Caco-2 (cell line): ENCODE measurements at regions of chr7 and their contacts with region 1.

Region 1: DNA sequence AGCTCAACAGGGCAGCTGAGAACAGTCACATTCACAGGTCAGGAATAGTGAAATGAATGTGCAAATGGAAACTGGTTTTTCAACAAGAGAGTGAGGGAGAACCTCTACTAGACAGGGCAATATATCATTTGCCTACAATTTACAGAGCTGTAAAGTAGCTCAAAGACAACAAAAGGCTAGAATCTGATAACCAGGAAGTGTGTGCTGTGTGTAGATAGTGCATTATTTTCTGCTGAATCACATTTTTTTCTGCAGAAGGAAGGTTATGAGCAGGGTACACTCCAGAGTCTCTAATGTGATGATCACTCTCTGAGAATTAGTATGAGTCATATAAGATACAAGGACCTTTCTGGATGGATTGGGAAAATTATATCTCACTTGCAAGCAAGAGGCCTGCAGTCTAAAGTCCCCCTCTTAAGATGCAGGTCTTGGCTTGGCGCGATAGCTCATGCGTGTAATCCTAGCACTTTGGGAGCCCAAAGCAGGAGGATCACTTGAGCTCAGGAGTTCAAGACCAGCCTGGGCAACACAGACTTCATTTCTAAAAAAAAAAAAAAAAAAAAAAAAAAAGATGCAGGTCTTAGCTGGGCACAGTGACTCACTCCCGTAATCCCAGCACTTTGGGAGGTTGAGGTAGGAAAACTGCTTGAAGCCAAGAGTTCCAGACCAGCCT is 59.9 kb upstream of the COBL start:
- DNase-seq: peak; percentile 74 to 79
- H3K4me3 ChIP-seq: no peak overlapping the region
- H3K4me3 Mint-ChIP-seq: peak overlapping the region; percentile 22
- H3K27ac Mint-ChIP-seq: peak overlapping the region; percentile 66
- H3K4me1 ChIP-seq: peaks cover 18% of the 10 kb centered on the region
- H3K4me1 Mint-ChIP-seq: peaks cover 9% of the 10 kb centered on the region
- H3K27me3 ChIP-seq: no peaks in the 10 kb centered on the region
- H3K27me3 Mint-ChIP-seq: no peaks in the 10 kb centered on the region
- CTCF ChIP-seq: no peak

Region 2: DNA sequence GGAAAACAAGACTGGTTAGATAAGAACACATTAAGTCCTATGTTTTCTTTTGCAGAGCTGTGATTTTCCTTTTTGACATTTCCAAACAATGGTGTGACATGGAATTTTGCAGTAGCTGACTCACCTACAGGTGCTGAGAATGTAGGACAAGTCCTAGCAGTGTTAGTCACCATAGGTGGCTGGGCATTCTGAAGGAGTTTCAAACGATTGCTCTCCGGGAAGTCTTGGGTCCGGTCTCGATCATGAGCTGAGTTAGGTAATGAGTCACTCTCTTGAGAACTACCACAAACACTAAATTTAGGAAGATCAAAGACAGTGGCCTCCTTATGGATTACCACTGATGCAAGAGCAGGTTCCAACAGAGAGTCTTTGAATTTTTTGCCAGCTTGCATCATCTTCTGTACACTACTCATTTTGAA is 930.0 kb before region 1 on chr7:
- CTCF ChIA-PET with region 1: no interaction called
- POLR2A ChIA-PET with region 1: interaction called, 3 read pairs
- intact Hi-C with region 1: loop called (anchors 1 kb)
- DNase-seq: peak; percentile 81 to 86
- H3K4me3 ChIP-seq: no peak overlapping the region
- H3K4me3 Mint-ChIP-seq: peak overlapping the region; percentile 32
- H3K27ac Mint-ChIP-seq: peak overlapping the region; percentile 68
- H3K4me1 ChIP-seq: peaks cover 27% of the 10 kb centered on the region
- H3K4me1 Mint-ChIP-seq: peaks cover 21% of the 10 kb centered on the region
- H3K27me3 ChIP-seq: no peaks in the 10 kb centered on the region
- H3K27me3 Mint-ChIP-seq: no peaks in the 10 kb centered on the region
- CTCF ChIP-seq: no peak

Region 3: GRCh38 chr7:51045319-51046102 is 331.0 kb before region 1 on chr7:
- CTCF ChIA-PET with region 1: no interaction called
- POLR2A ChIA-PET with region 1: no interaction called
- intact Hi-C with region 1: loop called (anchors 1 kb)
- DNase-seq: peak; percentile 78 to 89
- H3K4me3 ChIP-seq: no peak overlapping the region
- H3K4me3 Mint-ChIP-seq: peak overlapping the region; percentile 65
- H3K27ac Mint-ChIP-seq: peak overlapping the region; percentile 97
- H3K4me1 ChIP-seq: peaks cover 32% of the 10 kb centered on the region
- H3K4me1 Mint-ChIP-seq: peaks cover 27% of the 10 kb centered on the region
- H3K27me3 ChIP-seq: no peaks in the 10 kb centered on the region
- H3K27me3 Mint-ChIP-seq: no peaks in the 10 kb centered on the region
- CTCF ChIP-seq: no peak

Region 4: DNA sequence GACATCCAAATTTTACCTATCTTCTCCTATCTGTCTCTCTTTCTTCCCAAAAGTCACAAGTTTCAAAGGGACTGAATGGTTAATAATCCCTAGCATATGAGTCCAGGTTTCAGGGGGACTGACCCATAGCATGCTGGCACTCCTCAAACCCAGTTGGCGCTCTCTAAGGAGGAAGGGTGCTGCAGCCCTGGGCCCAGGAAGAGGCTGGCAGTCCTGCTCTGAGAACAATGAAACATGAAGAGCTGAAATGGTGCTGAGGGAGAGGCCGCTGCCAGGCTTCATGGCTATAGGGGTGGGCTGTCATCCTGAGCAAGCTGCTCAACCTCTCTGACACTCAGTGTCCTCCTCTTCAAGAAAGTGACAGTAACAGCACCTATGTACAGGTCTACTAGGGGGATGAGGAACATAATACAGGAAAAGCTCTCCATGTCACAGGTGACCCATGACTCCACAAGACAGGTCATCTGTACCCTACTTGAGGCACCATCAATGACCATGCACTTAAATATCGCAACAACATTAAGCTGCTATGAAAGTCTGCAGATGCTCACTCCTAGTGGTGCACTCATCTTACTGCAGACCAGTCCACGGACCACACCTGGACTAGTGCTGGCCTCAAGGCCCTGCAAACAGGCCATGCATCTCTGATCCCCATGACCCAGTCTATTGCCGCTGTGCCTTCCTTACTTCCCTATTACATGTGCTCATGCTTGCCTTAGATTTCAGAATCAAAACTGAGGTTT is 77.0 kb before region 1 on chr7:
- CTCF ChIA-PET with region 1: no interaction called
- POLR2A ChIA-PET with region 1: no interaction called
- intact Hi-C with region 1: no loop called
- DNase-seq: no peak
- H3K4me3 ChIP-seq: no peak overlapping the region
- H3K4me3 Mint-ChIP-seq: no peak overlapping the region
- H3K27ac Mint-ChIP-seq: no peak overlapping the region
- H3K4me1 ChIP-seq: peaks cover 20% of the 10 kb centered on the region
- H3K4me1 Mint-ChIP-seq: peaks cover 13% of the 10 kb centered on the region
- H3K27me3 ChIP-seq: no peaks in the 10 kb centered on the region
- H3K27me3 Mint-ChIP-seq: no peaks in the 10 kb centered on the region
- CTCF ChIP-seq: peak in 1 of 2 experiments; percentile 21

Region 5: DNA sequence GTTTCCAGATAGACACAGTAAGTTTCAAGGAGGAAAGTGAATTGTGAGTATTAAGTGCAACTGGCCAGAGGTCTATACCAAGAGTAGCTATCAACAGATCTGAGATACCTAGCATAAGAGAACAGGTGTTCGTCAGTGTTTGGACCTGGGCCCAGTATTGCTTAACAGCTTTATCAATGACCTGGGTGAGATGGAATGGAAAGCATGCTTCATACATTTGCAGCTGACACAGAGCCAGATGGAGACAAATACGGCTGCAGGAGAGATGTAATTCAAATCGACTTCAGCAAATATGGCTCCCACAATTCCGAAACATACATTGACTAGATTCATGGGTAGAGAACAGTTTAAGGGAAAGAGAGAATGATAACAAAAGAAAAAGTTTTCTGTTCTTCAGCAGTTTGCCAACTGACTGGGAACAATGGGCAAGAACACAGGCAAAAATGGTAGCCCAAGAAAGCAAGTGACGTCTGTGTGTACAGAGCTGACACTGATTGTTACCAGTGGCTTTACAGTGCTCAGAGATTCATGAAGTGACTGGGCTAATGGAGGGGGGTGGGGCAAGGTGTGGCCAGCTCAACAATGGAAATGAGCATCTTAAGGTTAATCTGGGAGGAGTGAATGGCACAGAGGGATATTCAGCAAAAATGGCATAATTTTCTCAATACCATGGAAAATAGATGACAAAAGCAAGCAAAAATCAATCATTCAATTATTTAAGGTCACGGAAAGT is 32.0 kb before region 1 on chr7:
- CTCF ChIA-PET with region 1: interaction called, 8 read pairs
- POLR2A ChIA-PET with region 1: interaction called, 4 read pairs
- intact Hi-C with region 1: loop called (anchors 1 kb)
- DNase-seq: peak; percentile 67 to 73
- H3K4me3 ChIP-seq: no peak overlapping the region
- H3K4me3 Mint-ChIP-seq: peak overlapping the region; percentile 51
- H3K27ac Mint-ChIP-seq: peak overlapping the region; percentile 76
- H3K4me1 ChIP-seq: peaks cover 60% of the 10 kb centered on the region
- H3K4me1 Mint-ChIP-seq: peaks cover 39% of the 10 kb centered on the region
- H3K27me3 ChIP-seq: no peaks in the 10 kb centered on the region
- H3K27me3 Mint-ChIP-seq: no peaks in the 10 kb centered on the region
- CTCF ChIP-seq: no peak